Activated T-helper 2 cell treated with anti-CD3 and anti-CD28 coated beads, Interferon-gamma antibody, Interleukin-2, Interleukin-4, amounts not matched to agents 10 μg/mL and 5 μg/mL and 100 μg/mL, durations not matched to agents 14 hours and 24 hours and 36 hours (primary cell): ENCODE measurements at regions of chr1 and their contacts with region 1.

Region 1: DNA sequence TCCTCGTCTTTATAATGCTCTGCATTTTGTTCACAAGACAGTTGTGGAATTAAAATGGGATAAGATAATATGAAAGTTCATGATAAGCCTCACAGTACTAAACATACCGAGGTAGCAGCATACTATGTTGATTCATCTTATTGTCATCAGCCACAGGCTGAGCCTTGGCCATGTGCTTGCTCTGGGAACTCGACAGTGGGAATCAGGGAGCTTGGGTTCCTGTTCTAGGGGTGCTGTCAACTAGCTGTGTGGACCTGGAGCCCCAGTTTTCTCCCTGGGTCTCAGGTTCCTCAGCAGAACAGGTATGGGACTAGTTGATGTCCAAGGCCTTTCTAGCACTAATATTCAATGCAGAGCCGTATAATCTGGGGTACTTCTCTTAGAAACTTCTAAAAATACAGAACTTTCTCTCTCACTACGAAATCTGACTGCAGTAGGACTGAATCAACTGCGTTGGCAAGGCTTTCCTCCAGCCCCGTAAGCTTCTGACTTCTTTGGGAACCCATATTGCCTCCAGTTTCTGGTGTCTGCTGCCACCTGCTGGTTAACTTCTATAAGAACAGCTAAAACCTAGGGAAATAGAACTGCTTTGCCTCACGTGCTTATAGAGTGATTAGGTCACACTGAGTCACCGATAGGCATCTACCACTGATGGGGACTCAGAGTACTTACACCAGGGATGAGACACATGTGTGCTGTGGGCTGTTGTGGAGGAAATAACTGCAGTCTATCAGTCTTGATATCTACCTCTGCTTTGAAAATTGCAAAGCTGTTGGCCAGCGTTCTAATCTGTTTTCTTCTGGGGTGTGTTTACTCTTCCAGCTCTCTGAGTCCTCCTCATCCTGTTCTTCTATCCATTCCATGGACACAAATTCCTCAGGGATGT is 110.9 kb downstream of the RGL1 start:
- DNase-seq: peak; percentile 72
- H3K4me3 Mint-ChIP-seq: no peak overlapping the region
- H3K27ac Mint-ChIP-seq: peak overlapping the region; percentile 21
- H3K4me1 Mint-ChIP-seq: peaks cover 32% of the 10 kb centered on the region
- H3K27me3 Mint-ChIP-seq: no peaks in the 10 kb centered on the region

Region 2: DNA sequence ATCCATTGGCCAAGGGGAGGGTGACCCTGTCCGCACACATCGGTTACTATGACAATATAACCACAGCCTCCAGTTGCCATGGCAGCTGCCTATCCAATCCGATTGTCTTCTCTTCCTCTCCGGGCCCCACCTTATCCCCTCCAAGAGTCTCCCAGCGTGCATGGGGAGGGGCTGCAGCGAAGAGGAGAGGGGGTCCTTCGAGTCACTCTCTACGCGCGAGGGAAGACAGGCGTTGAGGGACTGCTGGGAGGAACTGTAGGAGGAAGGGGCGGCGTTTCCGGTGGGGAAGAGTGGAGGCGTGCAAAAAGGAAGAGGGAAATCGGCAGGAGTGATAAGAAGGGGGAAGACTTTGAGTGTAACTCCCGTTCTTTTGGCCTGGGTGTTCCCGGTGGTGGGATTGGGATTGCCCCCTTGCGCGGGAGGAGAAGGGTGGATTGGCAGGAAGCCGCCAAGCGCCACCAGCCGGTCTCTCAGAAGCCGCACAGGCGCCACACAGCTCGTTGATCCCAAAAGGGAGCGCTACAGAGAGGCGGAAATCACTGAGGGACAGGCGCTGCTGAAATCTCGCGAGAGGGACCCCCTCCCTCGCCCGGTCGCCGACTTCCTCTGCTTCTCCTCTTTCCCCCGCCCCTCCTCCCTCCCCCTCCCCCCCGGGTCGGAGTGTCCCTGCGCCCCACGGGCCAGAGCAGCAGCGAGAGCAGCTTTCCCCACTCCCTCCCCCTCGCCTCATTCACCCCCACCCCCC is 444.0 kb before region 1 on chr1:
- intact Hi-C with region 1: loop called (anchors 2 kb)
- DNase-seq: peak; percentile 92
- H3K4me3 Mint-ChIP-seq: peak overlapping the region; percentile 87
- H3K27ac Mint-ChIP-seq: peak overlapping the region; percentile 99
- H3K4me1 Mint-ChIP-seq: peaks cover 24% of the 10 kb centered on the region
- H3K27me3 Mint-ChIP-seq: no peaks in the 10 kb centered on the region

Region 3: GRCh38 chr1:183655562-183656075 is 260.2 kb before region 1 on chr1:
- intact Hi-C with region 1: loop called (anchors 1 kb)
- DNase-seq: peak; percentile 44
- H3K4me3 Mint-ChIP-seq: no peak overlapping the region
- H3K27ac Mint-ChIP-seq: no peak overlapping the region
- H3K4me1 Mint-ChIP-seq: peaks cover 38% of the 10 kb centered on the region
- H3K27me3 Mint-ChIP-seq: no peaks in the 10 kb centered on the region

Region 4: GRCh38 chr1:183804881-183805841 is 110.7 kb before region 1 on chr1 and contains the start of gene RGL1:
- intact Hi-C with region 1: loop called (anchors 5 kb)
- DNase-seq: peak; percentile 27
- H3K4me3 Mint-ChIP-seq: peak within 1 kb of the TSS; percentile 83
- H3K27ac Mint-ChIP-seq: no peak within 1 kb of the TSS
- H3K4me1 Mint-ChIP-seq: peaks cover 17% of the 10 kb centered on the region
- H3K27me3 Mint-ChIP-seq: peaks cover 15% of the 10 kb centered on the region
- total RNA-seq, gene RGL1: 2.2 TPM in 2 replicates

Region 5: GRCh38 chr1:183896466-183897048 is 19.3 kb before region 1 on chr1:
- intact Hi-C with region 1: loop called (anchors 1 kb)
- DNase-seq: no peak
- H3K4me3 Mint-ChIP-seq: no peak overlapping the region
- H3K27ac Mint-ChIP-seq: peak overlapping the region; percentile 40
- H3K4me1 Mint-ChIP-seq: peaks cover 16% of the 10 kb centered on the region
- H3K27me3 Mint-ChIP-seq: no peaks in the 10 kb centered on the region

Region 6: GRCh38 chr1:183942933-183943693 is 27.2 kb after region 1 on chr1:
- intact Hi-C with region 1: no loop called
- DNase-seq: no peak
- H3K4me3 Mint-ChIP-seq: no peak overlapping the region
- H3K27ac Mint-ChIP-seq: no peak overlapping the region
- H3K4me1 Mint-ChIP-seq: peaks cover 5% of the 10 kb centered on the region
- H3K27me3 Mint-ChIP-seq: peaks cover 9% of the 10 kb centered on the region

Region 7: DNA sequence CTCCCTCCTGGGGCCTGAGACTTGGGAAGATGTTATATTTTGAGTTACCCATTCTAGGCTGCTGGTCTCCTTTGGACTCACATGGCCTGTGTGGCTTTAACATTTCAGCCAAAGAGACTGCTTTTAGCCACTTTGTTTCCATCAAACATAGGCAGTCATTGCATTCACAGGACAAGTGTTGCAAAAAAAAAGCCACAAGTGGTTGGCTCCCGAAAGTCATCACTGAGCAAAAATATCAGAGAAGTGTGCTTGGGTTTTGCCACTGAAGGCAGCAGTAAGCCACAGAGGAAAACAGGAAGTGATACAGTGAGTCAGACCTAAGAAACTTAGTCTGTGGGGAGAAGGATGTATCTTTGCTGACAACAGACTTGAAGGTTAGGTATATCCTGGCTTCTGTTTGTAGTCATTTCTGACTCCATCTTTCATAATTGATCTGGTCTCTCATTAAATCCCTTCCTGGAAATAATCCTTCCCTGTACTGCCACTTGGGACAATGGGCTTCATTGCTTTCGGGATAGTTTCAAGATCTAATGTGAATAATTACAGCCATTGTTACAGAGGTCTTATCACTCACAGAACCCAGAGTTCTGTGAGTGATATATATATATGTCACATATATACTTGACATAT is 40.8 kb after region 1 on chr1:
- intact Hi-C with region 1: loop called (anchors 1 kb)
- DNase-seq: peak; percentile 63
- H3K4me3 Mint-ChIP-seq: no peak overlapping the region
- H3K27ac Mint-ChIP-seq: peak overlapping the region; percentile 88
- H3K4me1 Mint-ChIP-seq: peaks cover 18% of the 10 kb centered on the region
- H3K27me3 Mint-ChIP-seq: no peaks in the 10 kb centered on the region